ENCODE measurements at regions of chr15 and their contacts with region 1.

Region 1: GRCh38 chr15:99104788-99105513 is at the start of gene SYNM:
- DNase-seq: peak in 1 of 5 donors; percentile 12
- H3K4me3 ChIP-seq: peak within 1 kb of the TSS; percentile 37
- H3K4me3 Mint-ChIP-seq: peak within 1 kb of the TSS; percentile 38 to 79 (median 67)
- H3K27ac ChIP-seq: peak within 1 kb of the TSS; percentile 47
- H3K27ac Mint-ChIP-seq: peak within 1 kb of the TSS in 2 of 8 donors; percentile 51 to 53
- H3K4me1 ChIP-seq: peaks cover 10% of the 10 kb centered on the region
- H3K4me1 Mint-ChIP-seq: peaks cover 15 to 48% (median 18%) of the 10 kb centered on the region in 3 donors
- H3K27me3 ChIP-seq: peaks cover 4% of the 10 kb centered on the region
- H3K27me3 Mint-ChIP-seq: peaks cover 7 to 41% of the 10 kb centered on the region in 2 donors
- total RNA-seq, gene SYNM: 2.3 to 2.4 TPM

Region 2: DNA sequence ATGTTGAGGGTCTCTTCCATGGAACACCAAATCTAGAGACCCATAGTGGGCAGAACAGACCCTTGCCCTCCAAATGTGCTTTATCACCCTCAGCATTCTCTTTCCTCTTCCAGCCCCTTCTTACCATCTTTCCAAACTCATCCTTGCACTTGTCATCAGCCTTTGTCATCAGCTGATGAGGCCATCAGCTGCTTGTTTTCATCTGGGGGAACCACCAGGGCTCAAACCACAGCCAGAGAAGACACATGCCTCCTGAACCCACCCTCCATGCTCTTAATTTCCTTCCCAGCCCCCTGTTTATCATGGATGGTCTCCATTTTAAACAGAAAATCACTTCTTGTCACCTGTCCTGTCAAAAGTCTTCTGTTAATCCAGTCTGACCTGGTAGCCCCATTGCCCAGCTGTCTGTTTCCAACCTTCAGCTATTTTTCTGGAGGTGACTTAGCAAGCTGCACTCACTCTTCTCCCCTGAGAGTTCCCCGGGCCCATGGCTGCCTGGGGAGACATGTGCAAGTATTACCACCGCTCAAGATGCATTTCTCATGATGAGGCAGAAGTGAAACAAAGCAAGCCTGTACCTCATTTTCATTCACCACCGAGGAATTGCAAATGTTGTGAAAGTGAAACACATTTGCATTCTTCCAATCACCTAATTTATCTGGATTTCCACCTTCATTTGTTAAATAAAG is 14.8 kb before region 1 on chr15:
- CTCF ChIA-PET with region 1: no interaction called
- POLR2A ChIA-PET with region 1: no interaction called
- DNase-seq: no peak
- H3K4me3 ChIP-seq: no peak overlapping the region
- H3K4me3 Mint-ChIP-seq: no peak overlapping the region
- H3K27ac ChIP-seq: no peak overlapping the region
- H3K27ac Mint-ChIP-seq: peak overlapping the region in 1 of 8 donors; percentile 58
- H3K4me1 ChIP-seq: no peaks in the 10 kb centered on the region
- H3K4me1 Mint-ChIP-seq: peaks cover 0 to 5% (median 3%) of the 10 kb centered on the region in 3 donors
- H3K27me3 ChIP-seq: no peaks in the 10 kb centered on the region
- H3K27me3 Mint-ChIP-seq: peaks cover 0 to 3% of the 10 kb centered on the region in 2 donors

Region 3: DNA sequence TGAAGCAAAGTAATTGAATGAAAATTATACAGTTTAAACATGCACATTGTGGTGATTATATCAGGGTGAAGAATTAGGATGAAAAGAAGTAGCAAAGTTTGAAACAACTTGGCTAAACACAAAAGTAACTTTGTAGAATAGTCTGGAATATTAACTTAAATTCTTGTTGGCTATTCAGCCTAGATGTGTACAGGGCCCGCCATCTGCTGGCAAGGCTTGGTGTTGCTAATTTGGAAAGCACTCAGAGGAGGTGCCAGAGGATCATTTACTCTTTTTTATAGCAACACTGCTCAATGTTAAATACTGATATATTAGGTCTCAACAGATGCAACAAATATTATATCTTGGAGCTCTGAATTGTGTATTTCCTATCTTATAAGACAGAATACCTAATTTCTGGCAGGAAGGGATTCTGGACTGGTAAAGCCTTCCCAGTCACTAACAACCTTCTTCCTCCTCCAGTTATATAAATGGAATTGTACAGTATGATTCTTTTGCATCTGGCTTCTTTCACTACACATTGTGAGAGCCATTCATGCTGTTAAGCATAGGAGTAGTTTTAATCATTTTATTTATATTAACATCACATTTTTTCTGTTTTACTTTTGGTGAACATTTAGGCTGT is 108.3 kb after region 1 on chr15:
- CTCF ChIA-PET with region 1: interaction called, 21 read pairs
- POLR2A ChIA-PET with region 1: no interaction called
- DNase-seq: peak; percentile 22 to 70 (median 27)
- H3K4me3 ChIP-seq: no peak overlapping the region
- H3K4me3 Mint-ChIP-seq: no peak overlapping the region
- H3K27ac ChIP-seq: no peak overlapping the region
- H3K27ac Mint-ChIP-seq: no peak overlapping the region
- H3K4me1 ChIP-seq: no peaks in the 10 kb centered on the region
- H3K4me1 Mint-ChIP-seq: no peaks in the 10 kb centered on the region
- H3K27me3 ChIP-seq: no peaks in the 10 kb centered on the region
- H3K27me3 Mint-ChIP-seq: peaks cover 0 to 35% of the 10 kb centered on the region in 2 donors